Uterus (tissue), 4 donors: ENCODE measurements at regions of chr1 and their contacts with region 1.

Region 1: GRCh38 chr1:1307908-1308755 is at the starts of genes ACAP3 and PUSL1:
- DNase-seq: peak; percentile 93 to 95
- H3K4me3 ChIP-seq: peak within 1 kb of the TSS; percentile 49 to 66
- H3K27ac ChIP-seq: peak within 1 kb of the TSS; percentile 87 to 94
- H3K4me1 ChIP-seq: peaks cover 0 to 36% of the 10 kb centered on the region in 2 donors
- H3K27me3 ChIP-seq: no peaks in the 10 kb centered on the region
- CTCF ChIP-seq: peak in 2 of 4 experiments; percentile 1 to 21
- POLR2A ChIP-seq: peak in 1 of 2 donors; percentile 54
- total RNA-seq, gene ACAP3: 11.2 to 98.5 (median 44.0) TPM
- total RNA-seq, gene PUSL1: 14.7 to 34.1 (median 24.3) TPM

Region 2: DNA sequence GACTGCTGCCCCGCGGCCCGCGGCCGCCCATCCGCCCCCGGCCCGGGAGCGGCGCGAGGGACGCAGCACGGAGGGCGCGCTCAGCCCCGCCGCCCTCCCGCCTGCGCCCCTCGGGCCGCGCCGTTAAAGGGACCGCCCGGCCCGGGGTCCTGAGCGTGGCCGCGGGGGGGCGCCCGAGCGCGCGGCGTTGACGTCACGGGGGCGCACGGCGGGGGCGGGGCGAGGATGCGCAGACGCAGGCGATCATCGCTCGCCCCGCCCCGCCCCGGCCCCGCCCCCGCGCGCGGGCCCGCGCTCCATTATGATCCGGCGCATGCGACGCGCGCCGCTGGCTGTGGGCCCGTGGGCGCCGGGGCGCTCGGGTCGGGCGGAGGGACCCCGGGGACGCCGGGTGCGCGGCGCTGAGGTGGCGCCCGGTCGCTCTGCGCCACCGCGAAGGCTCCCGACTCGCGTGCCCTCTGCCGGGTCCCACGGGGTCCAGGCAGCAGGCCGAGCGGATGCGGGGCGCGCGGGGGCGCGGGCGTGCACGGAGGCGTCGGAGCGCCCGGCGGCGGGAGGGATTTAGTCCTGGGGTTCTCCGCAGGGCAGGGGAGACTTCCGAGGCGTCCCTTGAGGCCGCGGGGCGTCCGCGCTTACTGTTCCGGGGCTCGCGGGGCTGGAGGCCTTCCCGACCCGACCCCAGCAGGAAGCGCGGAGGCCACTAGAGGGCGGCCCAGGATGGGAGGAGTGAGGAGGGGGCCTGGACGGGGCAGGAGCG is 41.3 kb after region 1 on chr1 and contains the start of gene DVL1:
- intact Hi-C with region 1: loop called (anchors 10 kb)
- DNase-seq: peak; percentile 65 to 75
- H3K4me3 ChIP-seq: peak within 1 kb of the TSS; percentile 50 to 85
- H3K27ac ChIP-seq: peak within 1 kb of the TSS; percentile 95 to 97
- H3K4me1 ChIP-seq: peaks cover 21 to 28% of the 10 kb centered on the region in 2 donors
- H3K27me3 ChIP-seq: no peaks in the 10 kb centered on the region
- CTCF ChIP-seq: peak; percentile 33 to 71 (median 64)
- POLR2A ChIP-seq: peak; percentile 30 to 72
- total RNA-seq, gene DVL1: 35.6 to 94.5 (median 49.7) TPM